Ascending aorta (tissue), 2 donors: ENCODE measurements at regions of chr16 and their contacts with region 1.

Region 1: DNA sequence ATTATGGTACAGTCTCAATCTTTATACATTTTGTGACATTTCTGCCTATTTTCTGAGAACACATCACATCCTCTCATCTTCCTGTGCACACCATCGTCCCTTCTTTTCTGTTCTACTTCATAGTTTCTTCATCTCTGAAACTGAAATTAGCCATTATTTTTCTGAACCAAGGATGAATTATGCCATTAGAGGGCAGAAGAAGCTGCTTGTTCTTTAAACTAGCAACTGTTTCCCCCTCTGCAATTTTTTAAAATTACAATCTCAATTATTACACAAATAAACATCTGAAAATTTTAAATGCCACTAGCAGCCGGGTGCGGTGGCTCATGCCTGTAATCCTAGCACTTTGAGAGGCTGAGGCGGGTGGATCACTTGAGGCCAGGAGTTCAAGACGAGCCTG is 41.3 kb downstream of the RBBP6 start:
- DNase-seq: no peak
- H3K4me3 ChIP-seq: no peak overlapping the region
- H3K27ac ChIP-seq: no peak overlapping the region
- H3K4me1 ChIP-seq: no peaks in the 10 kb centered on the region
- H3K27me3 ChIP-seq: no peaks in the 10 kb centered on the region
- CTCF ChIP-seq: peak; percentile 27 to 64 (median 40)

Region 2: DNA sequence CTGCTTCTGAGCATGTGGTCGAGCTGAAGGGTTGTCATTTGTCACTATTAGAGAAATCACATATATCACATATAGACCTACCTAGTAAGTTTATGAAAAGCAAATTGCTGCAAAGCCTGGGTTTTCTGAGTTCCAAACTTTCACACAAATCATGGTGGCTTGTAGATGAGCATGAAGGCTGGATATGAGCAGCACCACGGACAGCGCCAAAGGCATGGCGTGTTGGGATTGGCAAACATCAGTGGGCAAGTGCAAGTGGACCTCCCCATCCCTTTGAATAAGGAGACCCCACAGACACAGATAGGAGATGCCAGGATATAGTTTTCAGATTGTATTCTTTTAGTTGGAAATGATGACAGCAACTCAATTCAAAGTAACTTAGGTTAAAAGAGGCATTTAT is 402.2 kb before region 1 on chr16:
- intact Hi-C with region 1: no loop called
- DNase-seq: no peak
- H3K4me3 ChIP-seq: no peak overlapping the region
- H3K27ac ChIP-seq: no peak overlapping the region
- H3K4me1 ChIP-seq: no peaks in the 10 kb centered on the region
- H3K27me3 ChIP-seq: no peaks in the 10 kb centered on the region
- CTCF ChIP-seq: no peak

Region 3: GRCh38 chr16:24645739-24646645 is 65.3 kb after region 1 on chr16:
- intact Hi-C with region 1: loop called (anchors 10 kb)
- DNase-seq: peak in 1 of 2 donors; percentile 86
- H3K4me3 ChIP-seq: no peak overlapping the region
- H3K27ac ChIP-seq: peak overlapping the region; percentile 30 to 60
- H3K4me1 ChIP-seq: peaks cover 0 to 10% of the 10 kb centered on the region in 2 donors
- H3K27me3 ChIP-seq: no peaks in the 10 kb centered on the region
- CTCF ChIP-seq: no peak

Region 4: DNA sequence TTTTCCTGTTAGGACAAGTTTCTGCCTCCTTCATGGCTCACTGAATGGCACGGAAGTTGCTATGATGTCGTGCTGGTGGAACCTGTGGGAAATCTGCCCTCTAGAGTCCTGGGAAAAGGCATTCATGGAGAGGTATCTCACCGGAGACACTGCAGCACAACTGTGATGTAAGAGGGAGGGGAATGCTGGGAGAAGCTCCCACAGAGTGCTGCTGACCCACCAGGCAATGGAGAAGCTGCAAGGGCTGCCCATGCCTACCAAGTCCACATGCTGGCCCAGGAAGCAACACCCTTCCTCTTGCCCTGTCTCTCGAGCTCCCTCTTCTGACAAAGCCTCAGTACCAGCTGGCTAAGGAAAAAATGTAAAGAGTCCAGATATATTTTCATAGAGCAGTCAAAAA is 219.9 kb after region 1 on chr16:
- intact Hi-C with region 1: loop called (anchors 5 kb)
- DNase-seq: no peak
- H3K4me3 ChIP-seq: no peak overlapping the region
- H3K27ac ChIP-seq: no peak overlapping the region
- H3K4me1 ChIP-seq: no peaks in the 10 kb centered on the region
- H3K27me3 ChIP-seq: no peaks in the 10 kb centered on the region
- CTCF ChIP-seq: peak in 1 of 3 experiments; percentile 30